ENCODE measurements at regions of chr4 and their contacts with region 1.

Region 1: GRCh38 chr4:110344162-110344561 is 131.8 kb upstream of the ENPEP start:
- DNase-seq: no peak
- ATAC-seq: peak; percentile 75
- H3K4me3 Mint-ChIP-seq: no peak overlapping the region
- H3K27ac Mint-ChIP-seq: no peak overlapping the region
- H3K4me1 Mint-ChIP-seq: peaks cover 4% of the 10 kb centered on the region; the same call in 1 of the 2 replicates
- H3K27me3 Mint-ChIP-seq: peaks cover 5% of the 10 kb centered on the region; the same call in 1 of the 2 replicates
- CTCF ChIP-seq: no peak

Region 2: GRCh38 chr4:110165382-110166285 is 178.5 kb before region 1 on chr4:
- CTCF ChIA-PET with region 1: no interaction called
- POLR2A ChIA-PET with region 1: no interaction called
- DNase-seq: no peak
- ATAC-seq: peak; percentile 65
- H3K4me3 Mint-ChIP-seq: no peak overlapping the region
- H3K27ac Mint-ChIP-seq: peak overlapping the region; percentile 95
- H3K4me1 Mint-ChIP-seq: peaks cover 17% of the 10 kb centered on the region
- H3K27me3 Mint-ChIP-seq: no peaks in the 10 kb centered on the region
- CTCF ChIP-seq: no peak

Region 3: DNA sequence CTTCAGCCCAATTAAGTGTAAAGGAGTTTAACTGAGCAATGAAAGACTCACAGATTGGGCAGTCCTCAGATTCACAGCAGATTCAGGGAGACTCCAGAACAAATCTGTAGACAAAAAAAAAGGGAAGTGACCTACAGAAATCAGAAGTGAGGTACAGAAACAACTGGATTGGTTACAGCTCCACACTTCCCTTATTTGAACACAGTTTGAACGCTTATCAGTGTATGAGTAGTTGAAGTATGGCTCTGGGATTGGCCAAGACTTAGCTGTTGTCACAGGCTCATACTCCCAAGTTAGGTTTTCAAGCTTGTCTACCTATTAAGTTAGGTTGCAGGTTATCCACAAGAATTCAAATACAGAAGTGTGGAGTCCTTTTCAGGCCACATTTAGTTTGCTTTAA is 33.4 kb before region 1 on chr4:
- CTCF ChIA-PET with region 1: interaction called, 21 read pairs
- POLR2A ChIA-PET with region 1: no interaction called
- DNase-seq: no peak
- ATAC-seq: no peak
- H3K4me3 Mint-ChIP-seq: no peak overlapping the region
- H3K27ac Mint-ChIP-seq: no peak overlapping the region
- H3K4me1 Mint-ChIP-seq: no peaks in the 10 kb centered on the region
- H3K27me3 Mint-ChIP-seq: no peaks in the 10 kb centered on the region
- CTCF ChIP-seq: no peak

Region 4: GRCh38 chr4:110371016-110371770 is 27.0 kb after region 1 on chr4:
- CTCF ChIA-PET with region 1: no interaction called
- POLR2A ChIA-PET with region 1: no interaction called
- DNase-seq: no peak
- ATAC-seq: no peak
- H3K4me3 Mint-ChIP-seq: no peak overlapping the region
- H3K27ac Mint-ChIP-seq: no peak overlapping the region
- H3K4me1 Mint-ChIP-seq: no peaks in the 10 kb centered on the region
- H3K27me3 Mint-ChIP-seq: peaks cover 4% of the 10 kb centered on the region
- CTCF ChIP-seq: no peak

Region 5: DNA sequence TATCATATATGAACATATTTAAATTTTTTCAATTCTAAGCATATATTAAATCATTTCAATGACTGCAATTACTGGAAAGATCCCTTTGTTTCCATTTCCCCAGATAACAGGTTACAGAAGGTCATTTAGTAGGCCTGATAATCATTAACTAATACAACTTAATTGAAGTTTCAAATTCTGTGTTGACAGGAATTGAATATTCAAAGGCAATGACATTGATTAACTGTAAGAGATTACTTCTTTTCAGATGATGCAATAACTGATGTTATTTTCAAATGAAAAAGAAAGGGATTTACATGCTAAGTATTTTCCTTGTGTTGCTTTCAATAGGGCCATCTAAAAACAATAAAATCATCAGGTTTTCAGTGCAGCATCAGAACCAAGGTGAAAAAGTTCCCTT is 50.7 kb after region 1 on chr4:
- CTCF ChIA-PET with region 1: no interaction called
- POLR2A ChIA-PET with region 1: no interaction called
- DNase-seq: no peak
- ATAC-seq: no peak
- H3K4me3 Mint-ChIP-seq: no peak overlapping the region
- H3K27ac Mint-ChIP-seq: no peak overlapping the region
- H3K4me1 Mint-ChIP-seq: peaks cover 8% of the 10 kb centered on the region; the same call in 1 of the 2 replicates
- H3K27me3 Mint-ChIP-seq: peaks cover 86% of the 10 kb centered on the region
- CTCF ChIP-seq: no peak

Region 6: DNA sequence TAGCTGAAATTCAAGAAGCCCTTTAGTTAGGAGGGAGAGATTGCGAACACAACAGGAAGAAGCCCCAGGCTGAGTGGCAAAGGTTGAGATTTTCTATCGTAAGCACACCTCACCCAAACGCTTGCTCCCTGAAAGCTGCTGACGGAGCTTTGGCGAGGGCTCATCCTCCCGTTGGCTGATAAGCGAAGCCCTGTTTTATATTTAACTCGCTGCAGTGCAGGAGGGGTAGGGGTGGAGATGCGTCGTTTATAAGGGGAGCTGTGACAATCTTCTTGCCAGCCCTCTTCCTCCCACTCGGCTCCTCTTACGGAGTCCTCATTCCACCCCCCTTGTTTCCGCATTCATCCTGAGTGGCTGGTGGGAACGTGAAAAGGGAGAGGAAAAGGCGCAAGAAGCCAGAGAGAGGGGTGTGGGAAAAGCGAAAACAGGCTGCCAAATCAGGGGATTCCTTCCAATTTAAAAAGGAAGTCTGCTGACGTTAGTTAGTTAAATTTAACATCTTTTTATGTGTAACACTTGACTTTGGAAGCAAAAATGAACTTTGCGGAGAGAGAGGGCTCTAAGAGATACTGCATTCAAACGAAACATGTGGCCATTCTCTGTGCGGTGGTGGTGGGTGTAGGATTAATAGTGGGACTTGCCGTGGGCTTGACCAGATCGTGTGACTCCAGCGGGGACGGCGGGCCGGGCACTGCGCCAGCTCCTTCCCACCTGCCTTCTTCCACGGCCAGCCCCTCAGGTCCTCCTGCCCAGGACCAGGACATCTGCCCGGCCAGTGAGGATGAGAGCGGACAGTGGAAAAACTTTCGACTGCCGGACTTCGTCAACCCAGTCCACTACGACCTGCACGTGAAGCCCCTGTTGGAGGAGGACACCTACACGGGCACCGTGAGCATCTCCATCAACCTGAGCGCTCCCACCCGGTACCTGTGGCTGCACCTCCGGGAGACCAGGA is 132.0 kb after region 1 on chr4 and contains the start of gene ENPEP:
- CTCF ChIA-PET with region 1: interaction called, 12 read pairs
- POLR2A ChIA-PET with region 1: no interaction called
- DNase-seq: peak; percentile 28
- ATAC-seq: peak; percentile 67
- H3K4me3 Mint-ChIP-seq: peak within 1 kb of the TSS; percentile 29
- H3K27ac Mint-ChIP-seq: 0 out of 2 replicates have a peak within 1 kb of the TSS, but pooled peaks have one; percentile 28
- H3K4me1 Mint-ChIP-seq: peaks cover 45% of the 10 kb centered on the region
- H3K27me3 Mint-ChIP-seq: peaks cover 11% of the 10 kb centered on the region
- CTCF ChIP-seq: no peak
- total RNA-seq, gene ENPEP: 0.33 to 0.98 TPM (median 0.39 TPM) in 3 replicates

Region 7: DNA sequence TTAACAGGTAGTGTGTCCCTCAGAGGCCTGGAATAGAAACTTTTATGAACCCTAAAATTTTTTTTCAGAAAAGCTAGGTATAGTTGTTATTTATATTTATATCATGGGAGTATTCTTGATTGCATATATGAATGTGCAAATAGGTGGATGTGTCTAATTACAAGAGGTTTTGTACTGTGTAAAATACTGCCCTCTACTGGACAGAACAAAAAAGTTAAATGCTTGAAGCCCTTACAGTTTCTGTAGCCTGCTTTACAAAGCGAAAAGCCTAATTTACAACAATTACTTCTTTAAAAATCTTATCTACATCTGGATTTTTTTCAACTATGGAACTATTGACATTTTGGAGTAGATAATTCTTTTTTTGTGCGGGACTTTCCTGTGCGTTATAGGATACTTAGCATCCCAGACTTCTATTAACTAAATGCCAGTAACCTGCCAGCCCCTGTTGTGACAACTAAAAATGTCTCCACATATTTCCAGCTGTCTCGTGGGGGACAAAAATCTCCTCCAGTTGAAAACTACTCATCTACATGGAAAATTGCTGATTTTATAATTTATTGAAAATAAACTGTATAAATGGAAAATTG is 166.9 kb after region 1 on chr4:
- CTCF ChIA-PET with region 1: interaction called, 140 read pairs
- POLR2A ChIA-PET with region 1: no interaction called
- DNase-seq: no peak
- ATAC-seq: no peak
- H3K4me3 Mint-ChIP-seq: no peak overlapping the region
- H3K27ac Mint-ChIP-seq: no peak overlapping the region
- H3K4me1 Mint-ChIP-seq: peaks cover 6% of the 10 kb centered on the region; the same call in 1 of the 2 replicates
- H3K27me3 Mint-ChIP-seq: no peaks in the 10 kb centered on the region
- CTCF ChIP-seq: peak; percentile 61

Region 8: DNA sequence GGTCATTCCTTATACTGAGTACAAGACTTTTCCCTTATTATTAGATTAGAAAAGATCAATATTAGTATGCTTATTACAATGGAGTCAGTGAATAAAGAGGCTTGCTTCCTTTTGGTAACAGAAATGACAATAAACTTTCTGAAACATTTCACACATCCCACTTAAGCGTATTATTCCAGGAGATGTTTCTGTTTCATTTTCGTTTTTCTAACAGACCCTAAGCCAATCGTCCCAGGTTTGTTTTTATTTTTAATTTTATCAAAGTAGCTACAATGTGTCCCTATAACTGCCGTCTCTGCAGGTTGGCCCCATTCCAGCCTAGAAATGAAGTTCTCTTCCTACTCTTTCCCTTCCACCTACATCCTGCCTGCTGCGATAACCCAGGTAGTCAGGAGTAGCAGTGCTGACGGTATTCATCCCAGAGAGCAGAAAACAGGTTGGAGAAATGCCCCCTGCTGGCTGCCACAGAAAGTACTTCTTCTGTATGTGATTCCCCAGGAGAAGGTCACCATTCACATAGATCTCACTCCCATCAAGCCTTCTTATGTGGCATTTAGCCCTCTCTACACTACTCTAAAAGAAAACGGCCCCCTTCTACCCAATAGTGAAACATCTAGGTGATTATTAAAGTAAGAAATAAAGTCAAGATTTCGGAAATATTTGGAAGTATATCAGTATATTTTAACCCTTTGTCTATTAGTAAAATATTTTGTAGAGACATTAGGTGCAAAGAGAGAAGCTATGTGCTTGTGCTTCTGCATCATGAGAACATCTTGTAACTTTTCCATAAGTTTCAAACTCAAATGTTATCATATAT is 172.2 kb after region 1 on chr4:
- CTCF ChIA-PET with region 1: interaction called, 140 read pairs
- POLR2A ChIA-PET with region 1: no interaction called
- DNase-seq: peak; percentile 81
- ATAC-seq: peak; percentile 99
- H3K4me3 Mint-ChIP-seq: no peak overlapping the region
- H3K27ac Mint-ChIP-seq: no peak overlapping the region
- H3K4me1 Mint-ChIP-seq: peaks cover 10% of the 10 kb centered on the region
- H3K27me3 Mint-ChIP-seq: no peaks in the 10 kb centered on the region
- CTCF ChIP-seq: peak; percentile 56

Measured in WTC11 (cell line).